MCF 10A (cell line): ENCODE measurements at regions of chr2 and their contacts with region 1.

Region 1: DNA sequence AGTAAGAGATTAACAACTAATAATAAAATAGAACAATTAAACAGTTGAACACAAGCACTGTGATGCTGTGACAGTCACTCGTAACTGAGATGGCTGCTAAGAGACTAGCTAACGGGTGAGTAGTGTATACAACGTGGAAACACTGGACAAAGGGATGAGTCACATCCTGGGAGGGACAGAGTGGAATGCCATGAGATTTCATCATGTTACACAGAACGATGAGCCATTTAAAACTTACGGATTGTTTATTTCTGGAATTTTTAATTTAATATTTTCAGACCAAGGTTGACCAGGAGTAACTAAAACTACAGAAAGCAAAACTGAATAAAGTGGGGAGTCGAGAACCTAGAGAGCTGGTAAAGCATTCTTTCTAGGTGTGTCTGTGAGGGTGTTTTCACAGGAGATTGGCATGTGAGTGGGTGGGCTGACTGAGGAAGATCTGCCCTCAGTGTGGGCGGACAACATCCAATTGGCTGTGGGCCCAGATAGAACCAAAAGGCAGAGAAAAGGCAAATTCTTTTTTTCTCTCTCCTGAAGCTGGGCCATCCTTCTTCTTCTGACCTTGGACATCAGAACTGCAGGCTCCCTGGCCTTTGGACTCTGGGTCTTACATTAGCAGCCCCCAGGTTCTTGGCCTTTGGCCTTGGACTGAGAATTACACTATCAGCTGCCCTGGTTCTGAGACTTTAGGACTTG is 14.6 kb downstream of the TMSB10 start:
- DNase-seq: peak; percentile 96
- H3K4me3 Mint-ChIP-seq: peak overlapping the region; percentile 61
- H3K27ac Mint-ChIP-seq: peak overlapping the region; percentile 100
- H3K4me1 Mint-ChIP-seq: peaks cover 24% of the 10 kb centered on the region
- H3K27me3 Mint-ChIP-seq: no peaks in the 10 kb centered on the region
- CTCF ChIP-seq: no peak

Region 2: GRCh38 chr2:84888401-84889276 is 31.4 kb before region 1 on chr2:
- CTCF ChIA-PET with region 1: interaction called, 18 read pairs
- POLR2A ChIA-PET with region 1: interaction called, 12 read pairs
- intact Hi-C with region 1: no loop called
- DNase-seq: peak; percentile 59
- H3K4me3 Mint-ChIP-seq: peak overlapping the region; percentile 51
- H3K27ac Mint-ChIP-seq: peak overlapping the region; percentile 83
- H3K4me1 Mint-ChIP-seq: peaks cover 6% of the 10 kb centered on the region
- H3K27me3 Mint-ChIP-seq: no peaks in the 10 kb centered on the region
- CTCF ChIP-seq: no peak

Region 3: DNA sequence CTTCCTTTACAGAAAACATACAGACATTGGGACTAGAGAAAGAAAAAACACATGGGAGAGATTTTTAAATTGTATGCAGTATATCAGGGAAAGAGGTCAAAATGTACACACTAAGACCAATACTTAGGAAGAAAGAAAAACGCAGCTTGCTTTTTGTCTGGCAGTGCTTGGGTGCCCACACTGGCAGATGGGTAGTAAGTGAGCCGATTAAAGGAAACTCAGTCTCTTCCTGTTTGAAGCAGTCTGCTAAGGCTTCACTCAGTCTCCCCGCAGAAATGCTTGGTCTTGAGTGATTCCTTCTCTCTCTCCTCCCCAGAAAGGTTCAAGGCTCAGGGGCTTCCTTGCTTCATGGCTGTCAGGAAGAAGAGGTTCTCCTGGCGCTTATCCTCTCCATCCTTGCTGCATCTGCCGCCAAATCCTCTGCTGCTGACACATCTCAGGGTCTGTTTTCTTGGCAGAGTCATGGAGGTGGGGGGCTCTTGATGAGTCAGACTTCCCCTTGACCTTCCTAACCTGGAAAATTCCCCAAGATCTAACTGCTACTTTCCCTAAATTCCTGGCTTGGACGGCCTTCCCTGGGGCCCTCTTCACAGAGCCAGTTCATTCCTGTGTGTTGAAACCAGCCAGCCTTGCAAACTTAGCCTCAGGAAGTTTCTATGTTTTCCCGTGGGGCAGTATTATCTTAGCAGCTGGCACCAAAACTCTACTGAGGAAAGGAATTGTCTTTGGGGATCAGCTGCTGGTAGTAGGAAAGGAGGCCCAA is 25.1 kb before region 1 on chr2:
- CTCF ChIA-PET with region 1: interaction called, 17 read pairs
- POLR2A ChIA-PET with region 1: interaction called, 15 read pairs
- intact Hi-C with region 1: no loop called
- DNase-seq: peak; percentile 55
- H3K4me3 Mint-ChIP-seq: no peak overlapping the region
- H3K27ac Mint-ChIP-seq: peak overlapping the region; percentile 41
- H3K4me1 Mint-ChIP-seq: peaks cover 30% of the 10 kb centered on the region
- H3K27me3 Mint-ChIP-seq: no peaks in the 10 kb centered on the region
- CTCF ChIP-seq: no peak

Region 4: DNA sequence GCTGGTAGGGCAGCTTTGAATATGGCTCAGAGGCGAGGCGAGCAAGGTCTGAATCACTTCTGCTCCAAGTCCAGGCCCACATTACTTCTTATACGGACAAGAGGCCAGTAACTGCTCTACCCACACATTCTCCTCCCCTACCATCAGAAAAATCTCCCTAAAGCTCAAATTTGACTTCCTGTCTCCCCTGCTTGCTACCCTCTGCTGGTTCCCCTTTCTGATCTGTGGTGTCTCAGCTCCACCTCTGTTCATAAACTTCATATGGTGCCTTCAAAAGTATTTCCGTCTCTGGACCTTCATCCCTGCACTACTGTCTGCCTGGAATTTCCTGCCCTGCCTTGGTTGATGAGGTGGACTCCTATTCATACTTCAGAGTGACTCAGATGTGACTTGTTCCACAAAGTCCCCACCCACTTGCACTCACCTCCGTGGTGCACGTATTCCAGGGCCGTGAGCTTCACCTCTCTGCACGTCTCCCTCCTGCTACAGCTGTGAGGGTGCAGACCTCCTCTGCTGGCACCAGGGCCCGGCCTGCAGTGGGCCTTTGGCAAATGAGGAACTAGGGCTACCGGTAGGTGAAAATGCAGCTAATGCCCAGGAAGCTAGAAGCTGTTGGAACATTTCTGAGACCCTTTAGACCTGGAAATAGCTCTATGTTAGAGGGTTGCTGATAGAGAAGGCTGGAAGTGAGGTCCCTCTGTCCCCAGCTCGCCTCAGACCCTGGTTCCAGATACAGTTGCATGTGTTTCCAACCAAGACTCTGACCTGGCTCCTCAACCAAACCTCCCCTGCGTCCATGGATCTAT is 26.4 kb after region 1 on chr2:
- CTCF ChIA-PET with region 1: interaction called, 64 read pairs
- POLR2A ChIA-PET with region 1: interaction called, 19 read pairs
- intact Hi-C with region 1: no loop called
- DNase-seq: peak; percentile 85
- H3K4me3 Mint-ChIP-seq: peak overlapping the region; percentile 8
- H3K27ac Mint-ChIP-seq: peak overlapping the region; percentile 89
- H3K4me1 Mint-ChIP-seq: peaks cover 13% of the 10 kb centered on the region
- H3K27me3 Mint-ChIP-seq: no peaks in the 10 kb centered on the region
- CTCF ChIP-seq: no peak

Region 5: GRCh38 chr2:84958135-84959044 is 38.4 kb after region 1 on chr2:
- CTCF ChIA-PET with region 1: interaction called, 23 read pairs
- POLR2A ChIA-PET with region 1: interaction called, 42 read pairs
- intact Hi-C with region 1: loop called (anchors 1 kb)
- DNase-seq: peak; percentile 97
- H3K4me3 Mint-ChIP-seq: peak overlapping the region; percentile 54
- H3K27ac Mint-ChIP-seq: peak overlapping the region; percentile 98
- H3K4me1 Mint-ChIP-seq: peaks cover 37% of the 10 kb centered on the region
- H3K27me3 Mint-ChIP-seq: no peaks in the 10 kb centered on the region
- CTCF ChIP-seq: no peak

Region 6: DNA sequence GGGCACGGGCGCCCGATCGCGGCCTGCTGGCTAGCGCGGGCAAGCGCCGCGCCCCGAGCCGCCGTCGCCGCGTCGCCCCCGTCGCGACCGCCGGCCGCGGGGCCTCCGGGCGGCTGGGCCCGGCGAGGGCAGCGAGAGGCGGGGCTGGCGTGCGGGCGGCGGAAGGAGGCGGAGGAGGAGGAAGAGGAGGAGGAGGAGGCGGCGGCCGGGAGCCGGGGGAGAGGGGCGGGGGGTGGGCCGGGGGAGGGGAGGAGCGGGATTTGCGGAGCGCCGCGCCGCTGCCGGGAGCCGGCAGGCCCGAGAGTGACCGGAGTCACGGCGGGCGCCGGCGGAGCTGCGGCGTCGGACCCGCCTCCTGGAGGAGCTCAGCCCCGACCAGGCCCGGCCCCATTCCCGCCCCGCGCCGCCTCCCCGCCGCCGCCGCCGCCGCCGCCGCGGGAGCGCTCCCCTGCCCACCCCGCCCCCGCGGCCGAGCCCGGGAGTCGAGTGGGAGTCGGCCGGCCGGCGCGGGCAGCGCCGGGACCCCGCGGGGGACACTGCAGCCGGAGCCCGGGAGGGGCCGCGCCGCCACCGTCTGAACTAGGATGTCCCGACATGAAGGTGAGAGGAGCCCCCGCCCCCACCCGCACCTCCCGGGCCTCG is 51.0 kb after region 1 on chr2 and contains the start of gene KCMF1:
- CTCF ChIA-PET with region 1: interaction called, 23 read pairs
- POLR2A ChIA-PET with region 1: interaction called, 46 read pairs
- intact Hi-C with region 1: no loop called
- DNase-seq: peak; percentile 69
- H3K4me3 Mint-ChIP-seq: peak within 1 kb of the TSS; percentile 97
- H3K27ac Mint-ChIP-seq: peak within 1 kb of the TSS; percentile 97
- H3K4me1 Mint-ChIP-seq: peaks cover 12% of the 10 kb centered on the region
- H3K27me3 Mint-ChIP-seq: no peaks in the 10 kb centered on the region
- CTCF ChIP-seq: no peak
- total RNA-seq, gene KCMF1: 169 and 170 TPM in 2 replicates